ENCODE measurements at regions of chr2 and their contacts with region 1.

Region 1: GRCh38 chr2:74334931-74335333 is 8.3 kb downstream of the SLC4A5 start:
- DNase-seq: peak; percentile 51 to 90
- H3K4me3 ChIP-seq: no peak overlapping the region
- H3K27ac ChIP-seq: no peak overlapping the region
- H3K4me1 ChIP-seq: no peaks in the 10 kb centered on the region
- H3K27me3 ChIP-seq: no peaks in the 10 kb centered on the region
- CTCF ChIP-seq: peak; percentile 90 to 95 (median 95)
- EP300 ChIP-seq: no peak
- POLR2A ChIP-seq: no peak
- RAD21 ChIP-seq: peak; percentile 72 to 78

Region 2: GRCh38 chr2:74238879-74239278 is 96.1 kb before region 1 on chr2:
- CTCF ChIA-PET with region 1: interaction called, 10 read pairs
- POLR2A ChIA-PET with region 1: no interaction called
- DNase-seq: no peak
- H3K4me3 ChIP-seq: no peak overlapping the region
- H3K27ac ChIP-seq: no peak overlapping the region
- H3K4me1 ChIP-seq: no peaks in the 10 kb centered on the region
- H3K27me3 ChIP-seq: no peaks in the 10 kb centered on the region; a peak in 1 of 7 replicates
- CTCF ChIP-seq: no peak
- EP300 ChIP-seq: no peak
- POLR2A ChIP-seq: no peak
- RAD21 ChIP-seq: no peak

Region 3: GRCh38 chr2:74261204-74261864 is 73.6 kb before region 1 on chr2:
- CTCF ChIA-PET with region 1: interaction called, 11 read pairs
- POLR2A ChIA-PET with region 1: no interaction called
- DNase-seq: peak; percentile 34 to 84
- H3K4me3 ChIP-seq: no peak overlapping the region
- H3K27ac ChIP-seq: no peak overlapping the region
- H3K4me1 ChIP-seq: peaks cover 0 to 4% (median 1%) of the 10 kb centered on the region in 4 experiments; a peak in 2 of 7 replicates
- H3K27me3 ChIP-seq: no peaks in the 10 kb centered on the region
- CTCF ChIP-seq: peak; percentile 61 to 86 (median 64)
- EP300 ChIP-seq: no peak
- POLR2A ChIP-seq: no peak
- RAD21 ChIP-seq: peak; percentile 88 to 90

Region 4: GRCh38 chr2:74278176-74278575 is 56.8 kb before region 1 on chr2:
- CTCF ChIA-PET with region 1: interaction called, 16 read pairs
- POLR2A ChIA-PET with region 1: no interaction called
- DNase-seq: no peak
- H3K4me3 ChIP-seq: no peak overlapping the region
- H3K27ac ChIP-seq: no peak overlapping the region
- H3K4me1 ChIP-seq: no peaks in the 10 kb centered on the region
- H3K27me3 ChIP-seq: no peaks in the 10 kb centered on the region
- CTCF ChIP-seq: no peak
- EP300 ChIP-seq: no peak
- POLR2A ChIP-seq: no peak
- RAD21 ChIP-seq: no peak

Region 5: DNA sequence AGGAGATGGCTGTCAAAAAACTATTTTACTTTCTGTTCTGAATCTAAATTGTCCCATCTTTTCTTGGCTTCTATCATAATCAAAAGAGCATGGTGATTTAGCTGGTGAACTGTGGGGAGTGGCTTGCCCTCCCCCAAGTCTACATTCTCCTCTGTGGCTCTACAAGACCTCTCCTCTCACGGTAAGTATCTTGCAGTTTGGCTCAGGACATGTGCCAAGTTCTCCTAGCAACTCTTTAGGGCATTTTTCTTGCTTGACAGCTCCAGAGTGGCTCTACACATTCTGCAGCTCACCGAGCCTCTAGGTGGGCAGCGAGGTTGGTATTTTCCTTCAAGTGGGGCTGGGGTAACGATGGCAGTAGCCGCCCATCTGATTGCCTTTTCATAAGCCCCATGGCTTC is 20.8 kb before region 1 on chr2:
- CTCF ChIA-PET with region 1: interaction called, 20 read pairs
- POLR2A ChIA-PET with region 1: no interaction called
- DNase-seq: peak in 1 of 2 experiments; percentile 16
- H3K4me3 ChIP-seq: no peak overlapping the region
- H3K27ac ChIP-seq: no peak overlapping the region
- H3K4me1 ChIP-seq: no peaks in the 10 kb centered on the region
- H3K27me3 ChIP-seq: no peaks in the 10 kb centered on the region
- CTCF ChIP-seq: no peak
- EP300 ChIP-seq: no peak
- POLR2A ChIP-seq: no peak
- RAD21 ChIP-seq: no peak

Region 6: GRCh38 chr2:74357627-74358026 is 22.7 kb after region 1 on chr2:
- CTCF ChIA-PET with region 1: interaction called, 33 read pairs
- POLR2A ChIA-PET with region 1: interaction called, 7 read pairs
- DNase-seq: no peak
- H3K4me3 ChIP-seq: no peak overlapping the region
- H3K27ac ChIP-seq: no peak overlapping the region
- H3K4me1 ChIP-seq: peaks cover 0 to 2% (median 0%) of the 10 kb centered on the region in 4 experiments; a peak in 2 of 7 replicates
- H3K27me3 ChIP-seq: no peaks in the 10 kb centered on the region
- CTCF ChIP-seq: no peak
- EP300 ChIP-seq: no peak
- POLR2A ChIP-seq: no peak
- RAD21 ChIP-seq: no peak

Region 7: DNA sequence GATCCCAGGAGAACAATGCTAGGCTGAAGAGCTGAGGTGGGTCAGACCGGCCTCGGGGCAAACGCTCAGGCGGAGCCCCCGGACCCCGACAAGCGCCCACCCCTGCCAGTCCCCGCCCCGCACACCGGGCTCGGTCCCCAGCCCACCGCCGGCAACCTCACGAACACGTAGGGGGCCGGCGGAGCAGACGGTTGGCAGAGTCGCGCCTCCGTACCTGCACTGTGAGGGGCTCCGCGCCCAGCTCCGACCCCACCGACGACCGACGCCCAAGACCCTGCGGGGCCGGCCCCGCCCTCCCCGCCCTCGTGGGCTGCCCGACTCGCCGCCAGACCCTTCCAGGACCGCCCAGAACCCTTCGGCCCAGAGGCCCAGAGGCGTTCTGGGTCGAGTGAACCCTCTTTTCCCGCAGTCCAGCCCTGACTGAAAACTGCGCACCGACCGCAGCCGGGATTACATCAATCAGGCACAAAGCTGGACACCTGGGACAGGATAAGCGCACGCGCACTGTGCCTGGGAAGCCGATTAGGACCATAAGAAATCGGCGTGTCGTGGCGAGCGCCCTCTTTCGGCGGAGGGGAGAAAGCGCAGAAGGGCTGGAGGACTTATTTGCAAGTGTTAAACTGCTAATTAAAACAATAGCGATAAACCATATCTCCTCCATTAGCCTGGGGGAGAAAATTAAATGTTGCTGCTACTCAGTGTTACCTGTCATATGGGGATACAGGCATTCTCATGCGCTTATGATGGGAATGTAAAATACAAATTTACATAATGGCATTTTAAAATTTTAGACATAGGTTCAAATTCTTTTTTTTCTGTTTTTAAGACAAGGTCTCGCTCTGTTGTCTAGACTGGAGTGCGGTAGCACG is 56.9 kb after region 1 on chr2:
- CTCF ChIA-PET with region 1: interaction called, 49 read pairs
- POLR2A ChIA-PET with region 1: interaction called, 6 read pairs
- DNase-seq: peak; percentile 90 to 98
- H3K4me3 ChIP-seq: peak overlapping the region; percentile 86 to 96 (median 90)
- H3K27ac ChIP-seq: peak overlapping the region; percentile 98
- H3K4me1 ChIP-seq: peaks cover 0 to 3% (median 0%) of the 10 kb centered on the region in 4 experiments; a peak in 4 of 7 replicates
- H3K27me3 ChIP-seq: no peaks in the 10 kb centered on the region
- CTCF ChIP-seq: peak; percentile 75 to 98 (median 97)
- EP300 ChIP-seq: no peak
- POLR2A ChIP-seq: peak in 1 of 2 experiments; percentile 93; a peak in 2 of 3 replicates
- RAD21 ChIP-seq: peak; percentile 41 to 42

Measured in H1 (cell line).